CD8-positive, alpha-beta T cell (primary cell): ENCODE measurements at regions of chr19 and their contacts with region 1.

Region 1: DNA sequence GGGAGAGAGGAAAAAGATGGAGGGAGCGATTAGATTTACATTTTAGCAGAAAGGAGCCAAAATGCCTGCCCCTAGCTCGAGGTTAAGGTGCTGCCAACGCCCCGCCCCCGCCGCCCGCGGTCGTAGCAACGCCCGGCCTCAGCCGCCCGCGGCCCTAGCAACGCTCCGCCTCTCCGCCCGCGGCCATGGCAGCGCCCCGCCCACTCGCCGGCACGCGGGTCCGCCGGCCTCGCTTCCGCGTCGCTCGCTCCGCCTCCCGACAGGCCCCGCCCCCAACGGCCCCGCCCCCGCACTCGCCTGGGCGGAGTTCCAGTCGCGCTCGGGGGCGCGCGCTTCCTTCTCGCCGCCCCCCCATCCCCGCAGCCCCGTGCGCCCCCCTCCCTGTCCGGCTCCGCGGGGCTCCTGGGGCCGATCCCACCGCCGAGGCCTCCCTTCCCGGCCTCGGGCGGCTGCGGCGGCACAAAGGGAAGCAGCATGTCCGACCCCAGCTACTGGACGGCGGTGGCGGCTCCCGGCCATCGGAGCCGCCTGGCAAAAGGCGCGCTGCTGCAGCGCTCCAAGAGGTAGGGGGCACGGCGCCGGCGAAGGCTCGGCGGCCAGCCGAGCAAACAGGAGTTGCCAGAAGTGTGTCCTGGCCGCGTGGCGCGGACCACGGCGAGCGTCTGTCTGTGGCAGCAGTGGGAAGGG is 20.3 kb downstream of the MAST3 start:
- DNase-seq: peak; percentile 91 to 99 (median 96)
- ATAC-seq: peak; percentile 80
- H3K4me3 ChIP-seq: peak overlapping the region; percentile 58 to 85
- H3K4me3 Mint-ChIP-seq: peak overlapping the region; percentile 88
- H3K27ac ChIP-seq: peak overlapping the region; percentile 66 to 70
- H3K27ac Mint-ChIP-seq: peak overlapping the region; percentile 96
- H3K4me1 ChIP-seq: peaks cover 32% of the 10 kb centered on the region
- H3K4me1 Mint-ChIP-seq: peaks cover 38% of the 10 kb centered on the region
- H3K27me3 ChIP-seq: no peaks in the 10 kb centered on the region
- H3K27me3 Mint-ChIP-seq: no peaks in the 10 kb centered on the region
- CTCF ChIP-seq: no peak

Region 2: DNA sequence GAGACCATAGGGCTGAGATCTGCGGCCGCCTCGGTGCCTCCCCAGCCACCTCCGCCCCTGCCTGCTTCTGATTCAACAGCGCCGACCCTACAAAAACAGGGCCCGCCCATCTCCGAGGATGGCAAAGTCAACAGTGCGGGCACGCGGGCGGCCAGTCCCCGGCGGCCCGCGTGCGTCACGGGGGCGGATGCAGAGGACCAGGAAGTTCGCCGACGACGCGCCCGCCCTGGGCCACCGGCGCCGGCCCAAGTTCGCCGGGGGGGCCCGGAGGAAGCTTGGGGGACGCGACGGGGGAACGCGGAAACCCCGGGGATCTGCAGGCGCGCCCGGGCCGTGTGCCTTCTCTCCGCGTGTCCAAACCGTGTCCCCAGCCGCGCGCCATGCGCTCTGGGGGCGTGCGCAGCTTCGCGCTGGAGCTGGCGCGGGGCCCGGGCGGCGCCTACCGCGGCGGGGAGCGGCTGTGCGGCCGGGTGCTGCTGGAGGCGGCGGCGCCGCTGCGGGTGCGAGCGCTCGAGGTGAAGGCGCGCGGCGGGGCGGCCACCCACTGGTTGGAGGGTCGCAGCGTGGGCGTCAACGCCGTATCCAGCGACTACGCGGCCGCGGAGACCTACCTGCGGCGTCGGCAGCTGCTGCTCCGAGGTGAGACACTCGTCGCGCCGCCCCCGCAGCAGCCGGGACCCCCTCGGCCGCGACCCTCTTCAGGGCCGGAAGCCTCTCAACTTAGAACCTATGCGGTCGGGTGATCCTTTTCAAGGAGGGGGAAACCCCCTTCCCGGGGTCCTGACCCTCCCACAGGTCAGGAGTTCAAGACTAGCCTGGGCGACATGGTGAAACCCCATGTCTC is 116.7 kb before region 1 on chr19:
- CTCF ChIA-PET with region 1: interaction called, 3 read pairs
- POLR2A ChIA-PET with region 1: interaction called, 4 read pairs
- intact Hi-C with region 1: loop called in 1 of 2 experiments (anchors 1 kb)
- DNase-seq: peak; percentile 90 to 99 (median 96)
- ATAC-seq: peak; percentile 81
- H3K4me3 ChIP-seq: peak overlapping the region; percentile 65 to 69
- H3K4me3 Mint-ChIP-seq: peak overlapping the region; percentile 92
- H3K27ac ChIP-seq: peak overlapping the region; percentile 94
- H3K27ac Mint-ChIP-seq: peak overlapping the region; percentile 98
- H3K4me1 ChIP-seq: peaks cover 29% of the 10 kb centered on the region
- H3K4me1 Mint-ChIP-seq: peaks cover 32% of the 10 kb centered on the region
- H3K27me3 ChIP-seq: no peaks in the 10 kb centered on the region
- H3K27me3 Mint-ChIP-seq: no peaks in the 10 kb centered on the region
- CTCF ChIP-seq: no peak

Region 3: GRCh38 chr19:18074190-18074589 is 43.6 kb before region 1 on chr19:
- CTCF ChIA-PET with region 1: no interaction called
- POLR2A ChIA-PET with region 1: interaction called, 3 read pairs
- intact Hi-C with region 1: loop called in 1 of 2 experiments (anchors 1 kb)
- DNase-seq: no peak
- ATAC-seq: no peak
- H3K4me3 ChIP-seq: no peak overlapping the region
- H3K4me3 Mint-ChIP-seq: no peak overlapping the region
- H3K27ac ChIP-seq: no peak overlapping the region
- H3K27ac Mint-ChIP-seq: no peak overlapping the region
- H3K4me1 ChIP-seq: peaks cover 8% of the 10 kb centered on the region
- H3K4me1 Mint-ChIP-seq: peaks cover 15% of the 10 kb centered on the region
- H3K27me3 ChIP-seq: no peaks in the 10 kb centered on the region
- H3K27me3 Mint-ChIP-seq: no peaks in the 10 kb centered on the region
- CTCF ChIP-seq: no peak

Region 4: DNA sequence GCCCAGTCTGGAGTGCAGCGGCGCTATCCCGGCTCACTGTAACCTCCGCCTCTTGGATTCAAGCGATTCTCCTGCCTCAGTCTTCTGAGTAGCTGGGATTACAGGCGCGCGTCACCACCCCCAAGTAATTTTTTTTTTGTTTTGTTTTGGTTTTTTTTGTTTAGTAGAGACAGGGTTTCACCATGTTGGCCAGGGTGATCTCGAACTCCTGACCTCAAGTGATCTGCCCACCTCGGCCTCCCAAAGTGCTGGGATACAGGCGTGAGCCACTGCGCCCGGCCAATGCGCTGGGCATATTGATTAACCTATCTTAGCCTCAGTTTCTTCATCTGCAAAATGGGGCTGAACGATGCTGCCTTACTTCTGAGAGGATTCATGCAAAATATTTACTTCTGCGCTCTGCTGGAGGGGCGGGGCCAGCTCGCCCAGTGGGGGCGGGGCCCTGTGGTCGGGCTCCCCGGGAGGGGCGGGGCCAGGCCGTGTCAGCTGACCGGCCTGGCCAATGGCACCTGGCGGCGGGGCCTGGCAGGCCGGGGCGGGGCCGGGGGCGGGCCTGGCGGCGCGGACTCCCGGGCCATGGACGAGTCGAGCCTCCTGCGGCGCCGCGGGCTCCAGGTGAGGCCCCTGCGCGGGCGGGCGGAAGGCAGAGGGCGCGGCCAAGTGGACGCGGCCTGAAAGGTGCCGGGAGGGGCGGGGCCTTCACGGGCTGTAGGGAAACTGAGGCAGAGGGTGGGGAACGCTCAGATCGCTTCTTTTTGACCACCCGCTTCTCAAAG is 20.4 kb before region 1 on chr19 and contains the start of gene MAST3:
- CTCF ChIA-PET with region 1: interaction called, 14 read pairs
- POLR2A ChIA-PET with region 1: interaction called, 15 read pairs
- intact Hi-C with region 1: loop called (anchors 1 to 2 kb)
- DNase-seq: peak; percentile 84 to 95 (median 92)
- ATAC-seq: peak; percentile 96
- H3K4me3 ChIP-seq: peak within 1 kb of the TSS; percentile 63 to 66
- H3K4me3 Mint-ChIP-seq: peak within 1 kb of the TSS; percentile 89
- H3K27ac ChIP-seq: peak within 1 kb of the TSS; percentile 26 to 40
- H3K27ac Mint-ChIP-seq: peak within 1 kb of the TSS; percentile 72
- H3K4me1 ChIP-seq: peaks cover 35% of the 10 kb centered on the region
- H3K4me1 Mint-ChIP-seq: peaks cover 47% of the 10 kb centered on the region
- H3K27me3 ChIP-seq: no peaks in the 10 kb centered on the region
- H3K27me3 Mint-ChIP-seq: no peaks in the 10 kb centered on the region
- CTCF ChIP-seq: no peak
- total RNA-seq, gene MAST3: 13.7 to 15.2 TPM

Region 5: GRCh38 chr19:18160971-18161635 is 43.3 kb after region 1 on chr19:
- CTCF ChIA-PET with region 1: interaction called, 20 read pairs
- POLR2A ChIA-PET with region 1: interaction called, 3 read pairs
- intact Hi-C with region 1: loop called in 1 of 2 experiments (anchors 1 kb)
- DNase-seq: peak; percentile 65 to 93 (median 82)
- ATAC-seq: peak; percentile 99
- H3K4me3 ChIP-seq: peak overlapping the region in 1 of 2 experiments; percentile 19
- H3K4me3 Mint-ChIP-seq: peak overlapping the region; percentile 68
- H3K27ac ChIP-seq: peak overlapping the region in 1 of 2 experiments; percentile 30
- H3K27ac Mint-ChIP-seq: no peak overlapping the region
- H3K4me1 ChIP-seq: peaks cover 14% of the 10 kb centered on the region
- H3K4me1 Mint-ChIP-seq: peaks cover 13% of the 10 kb centered on the region
- H3K27me3 ChIP-seq: no peaks in the 10 kb centered on the region
- H3K27me3 Mint-ChIP-seq: no peaks in the 10 kb centered on the region
- CTCF ChIP-seq: peak; percentile 55

Region 6: DNA sequence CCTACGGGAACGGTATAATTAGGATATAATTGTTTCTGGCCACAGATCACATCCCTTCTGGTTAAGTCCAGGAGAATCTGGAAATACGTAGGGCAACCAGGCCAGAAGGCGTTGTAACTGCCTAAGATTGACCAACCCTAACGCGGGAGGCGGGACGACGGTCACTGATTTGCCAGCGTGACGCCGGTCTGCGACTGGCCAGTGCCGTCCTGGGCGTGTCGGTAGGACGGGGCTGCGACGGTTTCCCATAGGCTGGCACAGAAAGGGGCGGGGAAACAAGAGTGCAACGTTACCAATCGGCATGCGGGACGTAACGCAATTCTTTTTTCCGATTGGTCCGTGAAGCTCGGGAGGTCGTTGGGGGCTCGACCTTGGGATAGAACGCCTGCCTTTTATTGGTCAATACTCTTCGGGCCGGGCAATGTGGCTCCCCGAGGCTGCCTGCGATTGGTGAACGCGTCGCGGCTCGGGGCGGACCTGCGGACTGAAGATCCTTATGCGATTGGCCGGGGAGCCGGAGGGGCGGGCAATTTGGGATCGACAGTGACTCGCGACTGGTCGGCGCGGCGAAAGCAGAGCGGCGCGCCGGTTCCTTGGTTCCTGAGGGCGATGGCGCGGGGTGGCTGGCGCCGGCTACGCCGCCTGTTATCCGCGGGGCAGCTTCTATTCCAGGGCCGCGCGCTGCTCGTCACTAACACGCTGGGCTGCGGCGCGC is 75.0 kb after region 1 on chr19 and contains the start of gene MPV17L2:
- CTCF ChIA-PET with region 1: interaction called, 4 read pairs
- POLR2A ChIA-PET with region 1: no interaction called
- intact Hi-C with region 1: loop called (anchors 2 kb)
- DNase-seq: peak; percentile 95 to 100 (median 97)
- ATAC-seq: peak; percentile 84
- H3K4me3 ChIP-seq: peak within 1 kb of the TSS; percentile 73
- H3K4me3 Mint-ChIP-seq: peak within 1 kb of the TSS; percentile 87
- H3K27ac ChIP-seq: peak within 1 kb of the TSS; percentile 64 to 82
- H3K27ac Mint-ChIP-seq: peak within 1 kb of the TSS; percentile 90
- H3K4me1 ChIP-seq: peaks cover 18% of the 10 kb centered on the region
- H3K4me1 Mint-ChIP-seq: peaks cover 22% of the 10 kb centered on the region
- H3K27me3 ChIP-seq: no peaks in the 10 kb centered on the region
- H3K27me3 Mint-ChIP-seq: no peaks in the 10 kb centered on the region
- CTCF ChIP-seq: no peak
- total RNA-seq, gene MPV17L2: 4.0 to 5.2 TPM

Region 7: DNA sequence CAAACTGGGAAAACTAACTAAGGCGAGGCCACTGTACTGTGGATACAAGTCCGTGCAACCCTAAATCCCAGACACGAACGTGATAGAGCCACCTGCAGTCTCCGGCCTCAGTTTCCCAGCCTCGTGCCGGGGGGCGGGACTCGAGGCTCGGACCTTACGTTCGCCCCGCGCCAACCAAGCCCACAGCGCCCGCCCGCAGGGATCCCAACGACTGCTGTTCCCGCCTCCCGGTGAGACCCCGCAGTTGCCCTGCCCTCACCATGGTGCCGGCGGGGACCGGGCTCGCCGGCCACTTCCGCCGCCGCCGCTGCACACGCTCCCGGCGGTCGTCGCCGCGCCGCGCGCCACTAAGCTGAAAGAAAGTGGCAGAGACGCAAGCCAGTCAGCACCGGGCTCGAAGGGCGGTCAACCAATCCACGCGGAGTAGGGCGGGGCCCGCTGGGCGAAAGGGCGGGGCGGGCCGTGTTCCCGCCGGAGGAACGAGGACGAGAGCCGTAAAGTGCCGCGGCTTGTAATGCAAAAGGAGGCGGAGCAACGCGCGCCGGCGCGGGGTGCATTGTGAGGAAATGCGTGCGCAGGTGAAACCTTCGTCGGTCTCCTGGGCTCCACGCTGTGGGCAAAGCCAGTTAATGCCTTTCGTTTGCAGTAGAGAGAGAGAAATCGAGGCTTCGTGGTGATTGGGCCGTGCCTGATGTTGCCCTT is 205.1 kb after region 1 on chr19 and contains the start of gene LSM4:
- CTCF ChIA-PET with region 1: no interaction called
- POLR2A ChIA-PET with region 1: no interaction called
- intact Hi-C with region 1: loop called in 1 of 2 experiments (anchors 10 kb)
- DNase-seq: peak; percentile 99 to 100 (median 99)
- ATAC-seq: peak; percentile 94
- H3K4me3 ChIP-seq: peak within 1 kb of the TSS; percentile 84 to 94
- H3K4me3 Mint-ChIP-seq: peak within 1 kb of the TSS; percentile 84
- H3K27ac ChIP-seq: peak within 1 kb of the TSS; percentile 81 to 85
- H3K27ac Mint-ChIP-seq: peak within 1 kb of the TSS; percentile 92
- H3K4me1 ChIP-seq: peaks cover 58% of the 10 kb centered on the region
- H3K4me1 Mint-ChIP-seq: peaks cover 47% of the 10 kb centered on the region
- H3K27me3 ChIP-seq: no peaks in the 10 kb centered on the region
- H3K27me3 Mint-ChIP-seq: no peaks in the 10 kb centered on the region
- CTCF ChIP-seq: peak; percentile 71
- total RNA-seq, gene LSM4: 41.1 to 43.9 TPM

Region 8: DNA sequence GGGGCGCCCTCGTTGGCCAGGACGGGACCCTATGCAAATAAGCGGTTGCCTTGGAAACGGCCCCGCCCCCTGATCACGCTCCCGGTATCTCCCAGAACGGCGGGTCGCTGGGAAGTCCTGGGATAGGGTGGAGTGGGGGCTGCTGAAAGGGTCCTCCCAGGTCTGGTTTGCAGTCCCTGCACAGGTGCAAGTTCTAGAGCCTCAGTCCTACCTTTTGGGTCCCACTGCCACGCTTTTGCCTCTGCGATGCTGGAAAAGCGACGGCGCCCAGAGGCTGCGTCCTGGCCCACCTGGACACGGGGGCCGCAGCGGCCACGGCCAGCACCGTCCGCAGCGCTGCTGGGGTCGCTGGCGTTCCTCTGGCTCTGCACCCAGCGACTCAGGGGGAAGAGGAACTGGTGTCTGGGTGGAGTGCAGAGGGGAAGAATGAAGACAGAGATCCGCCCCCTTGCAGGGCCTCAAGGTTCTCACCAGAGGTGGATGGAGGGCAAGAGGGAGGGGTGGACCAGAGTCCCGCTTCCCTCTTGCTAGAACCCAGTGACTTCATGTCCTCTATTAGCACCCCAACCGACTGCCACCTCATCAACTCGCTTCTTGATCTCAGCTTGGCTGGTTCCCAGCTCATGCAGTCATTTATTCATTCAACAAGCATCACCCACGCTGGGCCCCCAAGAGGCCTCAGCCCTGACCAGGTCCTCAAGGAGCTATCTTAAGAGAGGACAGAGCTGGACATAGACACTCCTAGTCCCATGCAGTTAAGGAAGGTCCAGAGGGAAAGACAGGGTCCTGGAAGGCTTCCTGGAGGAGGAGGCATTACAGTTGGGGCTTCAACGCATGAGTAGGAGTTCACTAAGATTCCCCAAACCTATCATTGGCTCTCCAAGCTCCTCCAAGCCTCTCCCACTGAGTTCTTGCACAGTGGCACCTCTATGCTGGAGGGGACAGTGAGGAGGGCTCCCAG is 279.7 kb after region 1 on chr19 and contains the start of gene LRRC25:
- CTCF ChIA-PET with region 1: no interaction called
- POLR2A ChIA-PET with region 1: no interaction called
- intact Hi-C with region 1: no loop called
- DNase-seq: peak in 1 of 9 experiments; percentile 48
- ATAC-seq: no peak
- H3K4me3 ChIP-seq: no peak within 1 kb of the TSS
- H3K4me3 Mint-ChIP-seq: no peak within 1 kb of the TSS
- H3K27ac ChIP-seq: no peak within 1 kb of the TSS
- H3K27ac Mint-ChIP-seq: no peak within 1 kb of the TSS
- H3K4me1 ChIP-seq: peaks cover 8% of the 10 kb centered on the region
- H3K4me1 Mint-ChIP-seq: peaks cover 3% of the 10 kb centered on the region
- H3K27me3 ChIP-seq: peaks cover 7 to 8% of the 10 kb centered on the region in 2 experiments
- H3K27me3 Mint-ChIP-seq: peaks cover 22% of the 10 kb centered on the region
- CTCF ChIP-seq: no peak
- total RNA-seq, gene LRRC25: 0.22 TPM in 1 of 2 experiments, not detected in the other